Right lobe of liver (tissue), 6 donors: ENCODE measurements at regions of chr11 and their contacts with region 1.

Region 1: GRCh38 chr11:68257475-68258362 is 14.1 kb downstream of the C11orf24 start:
- DNase-seq: peak; percentile 97 to 98 (median 97)
- ATAC-seq: peak; percentile 85 to 93 (median 90)
- H3K4me3 ChIP-seq: no peak overlapping the region
- H3K27ac ChIP-seq: peak overlapping the region in 2 of 3 donors; percentile 77 to 81
- H3K4me1 ChIP-seq: peaks cover 0 to 11% (median 4%) of the 10 kb centered on the region in 4 donors
- H3K27me3 ChIP-seq: no peaks in the 10 kb centered on the region
- CTCF ChIP-seq: peak; percentile 86 to 92 (median 90)
- POLR2A ChIP-seq: peak; percentile 32

Region 2: DNA sequence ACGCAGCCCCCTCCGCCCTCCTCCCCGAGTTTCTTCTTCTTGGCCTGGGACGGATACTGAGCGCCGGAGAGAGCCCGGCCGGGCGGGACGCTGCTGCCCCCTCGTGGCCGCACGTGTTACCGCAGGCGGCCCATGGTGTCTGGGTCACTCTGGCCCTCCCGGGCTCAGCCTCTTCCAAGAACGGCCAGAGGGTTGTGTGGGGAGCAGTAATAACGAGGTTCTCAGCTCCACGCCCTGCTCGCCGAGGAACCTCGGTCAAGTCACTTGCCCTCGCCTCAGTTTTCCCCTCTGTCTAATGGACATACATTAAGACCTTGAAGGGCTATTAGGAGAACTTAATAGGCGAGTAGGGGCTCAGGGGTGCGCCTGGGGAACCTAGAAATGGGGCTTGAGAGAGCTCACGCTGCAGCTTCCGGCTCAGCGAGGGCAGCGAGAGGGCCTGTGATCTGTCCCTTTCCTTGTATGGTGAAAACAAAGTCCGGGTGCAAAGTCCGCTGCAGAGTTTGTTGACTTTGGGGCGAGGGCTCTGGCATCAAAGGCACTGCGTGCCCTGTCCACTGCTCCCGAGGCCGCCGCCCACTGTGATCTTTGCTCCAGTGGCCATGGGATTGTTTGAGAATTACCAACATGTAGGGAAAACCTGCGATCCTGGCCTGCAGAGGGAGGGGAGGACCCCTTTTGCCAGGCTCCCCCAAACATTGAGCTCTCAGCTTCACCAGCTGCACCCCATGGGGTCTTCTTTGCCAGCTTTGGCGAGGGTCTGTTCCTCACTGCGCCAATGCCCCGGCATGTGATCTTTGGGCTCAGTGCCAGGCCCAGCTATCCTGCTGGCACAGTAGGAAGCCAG is 40.3 kb after region 1 on chr11:
- intact Hi-C with region 1: loop called (anchors 5 kb)
- DNase-seq: peak; percentile 89 to 96 (median 94)
- ATAC-seq: peak; percentile 84 to 92 (median 88)
- H3K4me3 ChIP-seq: peak overlapping the region; percentile 16 to 45 (median 38)
- H3K27ac ChIP-seq: peak overlapping the region; percentile 87 to 98 (median 97)
- H3K4me1 ChIP-seq: peaks cover 3 to 34% (median 10%) of the 10 kb centered on the region in 4 donors
- H3K27me3 ChIP-seq: no peaks in the 10 kb centered on the region
- CTCF ChIP-seq: peak; percentile 96 to 99 (median 98)
- POLR2A ChIP-seq: peak; percentile 64

Region 3: GRCh38 chr11:68383976-68384501 is 126.3 kb after region 1 on chr11:
- intact Hi-C with region 1: loop called in 1 of 2 experiments (anchors 5 kb)
- DNase-seq: peak in 2 of 3 donors; percentile 68 to 70
- ATAC-seq: no peak
- H3K4me3 ChIP-seq: no peak overlapping the region
- H3K27ac ChIP-seq: no peak overlapping the region
- H3K4me1 ChIP-seq: peaks cover 2 to 74% (median 34%) of the 10 kb centered on the region in 4 donors
- H3K27me3 ChIP-seq: no peaks in the 10 kb centered on the region
- CTCF ChIP-seq: peak; percentile 85 to 95 (median 91)
- POLR2A ChIP-seq: no peak

Region 4: GRCh38 chr11:68447015-68447801 is 189.5 kb after region 1 on chr11:
- intact Hi-C with region 1: loop called in 1 of 2 experiments (anchors 10 kb)
- DNase-seq: peak; percentile 76 to 86 (median 81)
- ATAC-seq: peak; percentile 83 to 92 (median 86)
- H3K4me3 ChIP-seq: no peak overlapping the region
- H3K27ac ChIP-seq: no peak overlapping the region
- H3K4me1 ChIP-seq: no peaks in the 10 kb centered on the region
- H3K27me3 ChIP-seq: no peaks in the 10 kb centered on the region
- CTCF ChIP-seq: peak; percentile 91 to 97 (median 92)
- POLR2A ChIP-seq: no peak